ENCODE measurements at regions of chr13 and their contacts with region 1.

Region 1: DNA sequence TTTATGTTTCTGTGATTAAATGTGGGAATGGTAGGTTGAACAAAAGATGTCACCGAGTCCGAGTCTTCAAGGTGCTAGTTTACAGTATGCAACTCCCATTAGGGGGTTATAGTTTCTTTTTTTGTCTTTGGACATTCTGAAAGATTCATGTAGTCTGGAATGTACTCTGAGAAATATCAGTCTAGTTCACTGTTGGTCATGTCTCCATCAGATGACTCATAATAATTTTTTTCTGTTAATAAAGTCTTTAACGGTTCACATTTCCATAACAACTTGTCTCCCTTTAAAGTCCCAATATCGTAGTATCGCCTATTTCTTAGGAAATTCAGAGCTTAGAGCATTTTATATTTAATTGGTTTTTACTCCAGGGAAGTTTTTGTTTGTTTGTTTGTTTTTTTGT is 13.5 kb upstream of the ESD start:
- DNase-seq: no peak
- H3K4me3 ChIP-seq: no peak overlapping the region
- H3K4me3 Mint-ChIP-seq: no peak overlapping the region
- H3K27ac ChIP-seq: no peak overlapping the region
- H3K27ac Mint-ChIP-seq: no peak overlapping the region
- H3K4me1 ChIP-seq: no peaks in the 10 kb centered on the region
- H3K4me1 Mint-ChIP-seq: no peaks in the 10 kb centered on the region
- H3K27me3 ChIP-seq: no peaks in the 10 kb centered on the region
- H3K27me3 Mint-ChIP-seq: peaks cover 4 to 29% of the 10 kb centered on the region in 2 donors

Region 2: GRCh38 chr13:46778890-46779289 is 31.6 kb before region 1 on chr13:
- CTCF ChIA-PET with region 1: no interaction called
- POLR2A ChIA-PET with region 1: no interaction called
- DNase-seq: no peak
- H3K4me3 ChIP-seq: no peak overlapping the region
- H3K4me3 Mint-ChIP-seq: no peak overlapping the region
- H3K27ac ChIP-seq: no peak overlapping the region
- H3K27ac Mint-ChIP-seq: no peak overlapping the region
- H3K4me1 ChIP-seq: no peaks in the 10 kb centered on the region
- H3K4me1 Mint-ChIP-seq: peaks cover 0 to 15% (median 7%) of the 10 kb centered on the region in 3 donors
- H3K27me3 ChIP-seq: no peaks in the 10 kb centered on the region
- H3K27me3 Mint-ChIP-seq: no peaks in the 10 kb centered on the region

Region 3: DNA sequence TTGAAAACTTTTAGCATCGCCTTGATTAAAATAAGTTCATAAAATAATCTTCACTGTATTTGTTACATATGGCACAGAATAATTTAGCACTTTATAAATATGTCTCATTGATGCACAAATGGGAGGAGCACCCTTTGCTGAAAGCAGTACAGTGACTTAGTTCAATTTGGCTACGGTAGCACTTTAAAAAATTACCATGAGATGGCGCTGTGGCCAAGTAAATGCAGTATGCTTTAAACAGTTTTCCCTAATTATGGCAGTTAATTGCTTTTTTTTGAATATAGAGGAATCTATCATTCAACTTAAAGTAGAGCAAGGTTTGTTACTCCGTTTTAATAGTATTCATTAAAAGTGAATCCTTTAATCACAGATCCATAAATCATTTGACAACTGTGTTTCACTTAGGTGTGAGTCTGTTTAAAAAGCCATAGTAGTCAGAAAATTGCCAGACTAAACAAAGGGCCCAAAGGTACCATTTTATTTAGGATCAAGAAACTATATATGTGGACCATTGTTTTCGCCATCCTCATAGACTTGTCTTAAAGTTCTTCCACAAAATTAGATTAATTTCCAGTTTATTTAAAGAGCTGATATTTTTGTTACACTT is 21.3 kb after region 1 on chr13:
- CTCF ChIA-PET with region 1: no interaction called
- POLR2A ChIA-PET with region 1: interaction called, 10 read pairs
- DNase-seq: peak in 2 of 5 donors; percentile 3 to 7
- H3K4me3 ChIP-seq: no peak overlapping the region
- H3K4me3 Mint-ChIP-seq: no peak overlapping the region
- H3K27ac ChIP-seq: no peak overlapping the region
- H3K27ac Mint-ChIP-seq: no peak overlapping the region
- H3K4me1 ChIP-seq: no peaks in the 10 kb centered on the region
- H3K4me1 Mint-ChIP-seq: no peaks in the 10 kb centered on the region
- H3K27me3 ChIP-seq: no peaks in the 10 kb centered on the region
- H3K27me3 Mint-ChIP-seq: peaks cover 3 to 22% of the 10 kb centered on the region in 2 donors

Measured in CD8-positive, alpha-beta memory T cell (primary cell).